Endothelial cell of umbilical vein (primary cell): ENCODE measurements at regions of chr10 and their contacts with region 1.

Region 1: DNA sequence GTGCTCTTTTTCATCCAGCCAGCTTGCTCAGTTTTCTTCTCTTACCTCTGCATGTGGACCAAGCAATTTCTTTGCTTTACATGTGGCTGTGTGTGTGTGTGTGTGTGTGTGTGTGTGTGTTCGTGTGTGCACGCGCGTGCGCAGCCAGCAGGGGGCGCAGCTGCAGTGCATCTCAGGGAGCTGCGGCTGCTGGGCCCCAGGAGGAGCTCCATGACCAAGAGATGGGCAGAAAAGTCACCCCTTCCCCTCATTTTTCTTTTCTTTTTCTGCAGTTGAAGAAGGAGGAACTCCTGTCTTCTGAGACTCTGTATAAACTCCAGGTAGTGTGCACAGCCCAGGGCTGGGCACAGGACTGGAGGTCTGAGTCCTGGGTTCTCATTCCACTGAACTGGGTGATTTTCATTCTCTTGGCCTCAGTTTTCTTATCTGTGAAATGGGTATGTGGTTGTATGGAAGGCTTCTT is 41.8 kb downstream of the BLNK start:
- DNase-seq: peak; percentile 49
- H3K4me3 ChIP-seq: no peak overlapping the region
- H3K27ac ChIP-seq: no peak overlapping the region
- H3K4me1 ChIP-seq: no peaks in the 10 kb centered on the region
- H3K27me3 ChIP-seq: no peaks in the 10 kb centered on the region
- CTCF ChIP-seq: peak; percentile 92
- POLR2A ChIP-seq: no peak

Region 2: DNA sequence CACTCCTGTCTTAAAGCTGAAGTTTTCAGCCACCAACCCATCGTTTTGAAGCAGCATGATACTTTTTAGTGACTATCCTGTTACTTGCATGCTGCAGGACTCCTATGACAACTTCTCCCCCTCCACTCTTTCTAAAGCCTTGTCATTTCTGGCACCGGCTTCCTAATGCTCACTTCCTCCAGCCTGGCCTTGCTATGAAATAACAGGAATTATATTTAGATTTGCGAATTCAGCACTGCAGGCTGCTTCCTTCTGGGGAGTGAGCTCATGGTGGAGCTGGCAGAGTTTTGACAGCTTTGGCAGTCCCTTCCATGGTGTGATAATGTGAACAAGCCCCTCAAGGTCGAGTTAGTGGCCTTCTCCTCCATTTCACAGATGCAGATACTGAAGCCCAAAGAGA is 28.3 kb after region 1 on chr10:
- CTCF ChIA-PET with region 1: interaction called, 27 read pairs
- POLR2A ChIA-PET with region 1: no interaction called
- dilution Hi-C with region 1: no loop called
- intact Hi-C with region 1: no loop called
- DNase-seq: peak; percentile 19
- H3K4me3 ChIP-seq: no peak overlapping the region
- H3K27ac ChIP-seq: no peak overlapping the region
- H3K4me1 ChIP-seq: no peaks in the 10 kb centered on the region
- H3K27me3 ChIP-seq: no peaks in the 10 kb centered on the region
- CTCF ChIP-seq: no peak
- POLR2A ChIP-seq: no peak

Region 3: DNA sequence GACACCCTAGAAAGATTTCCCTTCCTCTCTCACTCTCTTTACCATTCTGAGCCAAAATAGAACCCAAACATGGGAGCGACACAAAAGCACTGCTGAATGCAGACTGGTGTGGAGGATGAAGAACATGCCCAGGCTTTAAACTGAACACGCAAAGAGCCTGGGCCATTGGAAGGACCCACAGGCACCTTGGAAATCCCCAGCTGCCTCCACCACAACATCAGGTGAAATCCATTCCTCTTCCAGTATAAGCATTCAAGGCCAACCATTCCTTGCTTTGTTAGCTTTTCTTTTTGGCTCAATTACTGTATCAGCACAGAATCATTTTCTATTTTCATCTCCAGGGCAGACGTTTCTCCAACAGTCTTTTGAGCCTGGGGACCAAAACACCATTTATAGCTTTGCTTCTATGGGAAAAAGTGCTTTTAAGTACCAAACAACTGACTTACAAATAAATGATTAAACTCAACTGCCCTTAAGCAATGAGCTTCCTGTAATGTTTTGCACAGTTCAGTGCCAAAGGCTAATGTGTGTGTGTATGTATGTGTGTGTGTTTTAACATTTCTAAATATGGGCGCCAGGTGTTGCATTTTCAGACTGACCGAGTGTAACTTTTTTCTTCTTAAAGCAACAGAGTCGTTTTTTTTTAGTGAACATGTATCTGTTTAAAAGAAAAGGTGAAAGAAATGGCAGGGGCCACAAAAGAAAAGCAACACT is 58.0 kb after region 1 on chr10:
- CTCF ChIA-PET with region 1: interaction called, 69 read pairs
- POLR2A ChIA-PET with region 1: no interaction called
- dilution Hi-C with region 1: no loop called
- intact Hi-C with region 1: no loop called
- DNase-seq: no peak
- H3K4me3 ChIP-seq: no peak overlapping the region
- H3K27ac ChIP-seq: no peak overlapping the region
- H3K4me1 ChIP-seq: no peaks in the 10 kb centered on the region
- H3K27me3 ChIP-seq: peaks cover 3 to 9% of the 10 kb centered on the region in 2 experiments
- CTCF ChIP-seq: no peak
- POLR2A ChIP-seq: no peak

Region 4: DNA sequence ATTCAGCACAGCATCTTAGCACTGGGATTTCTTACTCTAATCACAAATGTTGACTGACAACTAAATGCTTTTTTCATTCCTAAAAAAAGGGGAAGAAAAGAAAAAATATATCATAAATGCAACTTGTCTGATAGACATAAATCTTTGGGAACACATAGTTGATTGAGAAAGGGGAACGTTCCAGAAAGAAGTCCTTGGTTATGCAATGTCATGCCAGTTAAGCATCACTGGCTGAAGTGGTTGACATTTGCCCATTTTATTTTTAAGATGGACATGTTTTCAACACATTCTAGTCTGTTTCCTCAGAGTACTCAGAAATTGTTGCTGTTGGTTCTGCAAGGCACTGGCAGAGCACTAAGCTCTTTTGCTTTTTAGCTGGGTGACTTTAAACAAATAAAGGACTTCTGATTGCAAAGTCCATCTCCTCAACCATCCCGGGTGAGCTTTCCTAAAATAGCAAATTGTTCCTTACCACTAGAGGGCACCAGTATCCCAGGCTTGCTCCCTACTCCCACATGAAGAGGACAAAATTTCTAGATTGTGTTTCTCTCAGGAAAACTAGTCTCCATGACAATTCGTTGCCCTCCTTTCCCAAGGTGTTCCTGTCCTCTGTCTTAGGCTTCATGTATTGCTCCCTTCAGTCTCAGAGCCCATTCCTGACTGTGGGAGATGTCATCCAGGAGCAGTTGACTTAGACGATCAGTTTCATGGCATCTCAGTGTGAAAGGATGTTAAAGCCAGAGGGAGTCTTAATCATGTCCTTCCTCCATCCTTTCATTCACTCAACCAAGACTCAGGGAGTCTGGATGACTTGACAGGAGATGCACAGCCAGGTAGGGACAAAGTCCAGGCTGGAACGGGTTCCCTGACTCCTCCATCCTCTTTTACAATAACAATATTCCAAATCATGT is 105.3 kb after region 1 on chr10:
- CTCF ChIA-PET with region 1: interaction called, 16 read pairs
- POLR2A ChIA-PET with region 1: no interaction called
- dilution Hi-C with region 1: no loop called
- intact Hi-C with region 1: loop called (anchors 1 kb)
- DNase-seq: peak; percentile 50
- H3K4me3 ChIP-seq: no peak overlapping the region
- H3K27ac ChIP-seq: no peak overlapping the region
- H3K4me1 ChIP-seq: no peaks in the 10 kb centered on the region
- H3K27me3 ChIP-seq: peaks cover 0 to 6% of the 10 kb centered on the region in 2 experiments
- CTCF ChIP-seq: peak; percentile 68 to 74
- POLR2A ChIP-seq: no peak